Testis (tissue), 5 donors: ENCODE measurements at regions of chr4 and their contacts with region 1.

Region 1: DNA sequence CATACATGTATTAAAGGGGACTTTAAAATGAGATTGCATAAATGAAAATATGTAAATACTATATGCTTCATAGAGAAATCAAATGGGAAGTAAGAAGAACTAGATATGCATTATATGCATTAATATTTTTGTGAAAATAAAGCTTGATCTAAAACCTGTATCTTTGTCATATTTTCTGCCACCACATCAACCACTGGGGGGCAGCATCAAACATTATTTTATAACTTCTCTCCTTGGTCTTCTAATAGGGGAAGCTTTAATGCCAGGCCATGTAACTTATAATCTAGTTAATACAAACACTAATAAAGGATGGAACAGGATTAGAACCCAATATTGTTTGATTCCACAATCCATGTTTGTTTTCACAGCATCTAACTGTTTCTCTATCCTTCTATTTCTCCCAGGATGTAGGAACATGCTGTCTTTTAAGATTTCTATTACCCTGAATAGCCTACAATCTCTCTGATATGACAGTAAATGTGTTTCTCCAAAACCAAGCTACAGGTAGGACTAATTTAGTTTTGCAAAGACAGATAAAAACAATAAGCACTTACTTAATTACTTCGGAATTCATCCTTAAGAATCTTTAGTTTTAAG is 10.0 kb downstream of the QRFPR start:
- DNase-seq: peak; percentile 72
- H3K4me3 ChIP-seq: no peak overlapping the region
- H3K27ac ChIP-seq: no peak overlapping the region
- H3K4me1 ChIP-seq: no peaks in the 10 kb centered on the region
- H3K27me3 ChIP-seq: no peaks in the 10 kb centered on the region
- CTCF ChIP-seq: peak; percentile 29 to 70 (median 58)
- POLR2A ChIP-seq: no peak

Region 2: GRCh38 chr4:121217351-121217750 is 153.5 kb before region 1 on chr4:
- intact Hi-C with region 1: no loop called
- DNase-seq: no peak
- H3K4me3 ChIP-seq: no peak overlapping the region
- H3K27ac ChIP-seq: no peak overlapping the region
- H3K4me1 ChIP-seq: no peaks in the 10 kb centered on the region
- H3K27me3 ChIP-seq: no peaks in the 10 kb centered on the region
- CTCF ChIP-seq: no peak
- POLR2A ChIP-seq: no peak

Region 3: DNA sequence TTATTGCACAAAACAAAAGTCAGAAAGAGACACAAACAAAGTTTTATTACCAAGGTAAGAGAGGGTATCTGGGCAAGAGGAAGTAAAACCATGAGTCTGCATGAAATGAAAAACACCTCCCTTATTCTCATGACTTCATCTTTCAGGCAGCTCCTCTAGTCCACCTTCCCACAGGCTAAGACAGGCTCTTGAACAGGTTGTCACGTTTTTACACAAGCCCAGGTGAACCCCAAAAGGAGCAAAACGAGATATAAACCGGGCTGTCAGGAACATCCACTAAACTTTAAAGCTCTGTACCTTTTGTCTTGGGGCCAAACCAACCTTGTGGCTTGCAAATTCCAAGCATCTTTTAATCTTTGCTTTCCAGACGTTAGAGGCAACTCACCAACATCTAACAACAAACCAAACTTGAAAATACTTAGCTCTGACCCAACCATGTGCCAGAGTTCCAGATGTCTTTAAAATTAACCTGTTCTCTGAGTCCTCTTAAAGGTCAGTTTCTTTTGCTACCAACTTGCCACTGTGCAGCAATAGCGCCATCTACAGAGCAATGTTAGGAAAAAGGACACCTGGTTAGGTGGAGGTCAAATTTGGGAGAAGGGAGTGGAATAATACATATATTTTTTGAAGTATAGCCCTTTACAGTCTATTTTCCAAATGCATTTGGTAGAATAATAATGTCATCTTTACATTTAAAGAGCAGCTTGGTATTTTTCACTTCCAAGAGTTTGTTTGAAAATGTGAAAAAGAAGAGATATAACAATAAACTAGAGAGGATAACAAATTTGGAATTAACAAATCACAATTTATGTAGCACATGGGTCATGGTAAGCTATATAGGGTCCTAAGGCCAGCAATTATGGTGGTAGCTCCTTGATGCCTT is 63.1 kb before region 1 on chr4:
- intact Hi-C with region 1: no loop called
- DNase-seq: peak; percentile 51
- H3K4me3 ChIP-seq: no peak overlapping the region
- H3K27ac ChIP-seq: no peak overlapping the region
- H3K4me1 ChIP-seq: no peaks in the 10 kb centered on the region
- H3K27me3 ChIP-seq: no peaks in the 10 kb centered on the region
- CTCF ChIP-seq: peak in 2 of 3 experiments; percentile 46 to 51
- POLR2A ChIP-seq: no peak

Region 4: DNA sequence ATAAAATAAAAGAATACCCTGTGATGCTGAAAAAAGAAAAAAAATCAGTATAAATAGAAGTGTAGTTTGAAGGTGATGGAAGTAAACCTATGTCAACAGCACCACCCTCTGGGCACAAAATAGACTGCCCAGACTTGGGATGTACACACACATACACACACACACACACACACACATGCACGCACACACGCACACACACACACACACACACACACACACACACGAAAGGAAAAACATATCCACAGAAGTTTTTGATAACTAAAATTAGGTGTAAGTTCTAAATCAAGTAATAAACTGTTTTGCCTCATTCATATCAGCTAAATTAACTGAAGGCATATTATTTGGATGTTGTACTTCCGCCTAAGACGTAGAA is 285.4 kb after region 1 on chr4:
- intact Hi-C with region 1: loop called (anchors 5 kb)
- DNase-seq: peak; percentile 78
- H3K4me3 ChIP-seq: no peak overlapping the region
- H3K27ac ChIP-seq: peak overlapping the region in 1 of 2 donors; percentile 28
- H3K4me1 ChIP-seq: no peaks in the 10 kb centered on the region
- H3K27me3 ChIP-seq: no peaks in the 10 kb centered on the region
- CTCF ChIP-seq: peak; percentile 13 to 68 (median 34)
- POLR2A ChIP-seq: no peak